CD8-positive, alpha-beta memory T cell (primary cell): ENCODE measurements at regions of chr1 and their contacts with region 1.

Region 1: DNA sequence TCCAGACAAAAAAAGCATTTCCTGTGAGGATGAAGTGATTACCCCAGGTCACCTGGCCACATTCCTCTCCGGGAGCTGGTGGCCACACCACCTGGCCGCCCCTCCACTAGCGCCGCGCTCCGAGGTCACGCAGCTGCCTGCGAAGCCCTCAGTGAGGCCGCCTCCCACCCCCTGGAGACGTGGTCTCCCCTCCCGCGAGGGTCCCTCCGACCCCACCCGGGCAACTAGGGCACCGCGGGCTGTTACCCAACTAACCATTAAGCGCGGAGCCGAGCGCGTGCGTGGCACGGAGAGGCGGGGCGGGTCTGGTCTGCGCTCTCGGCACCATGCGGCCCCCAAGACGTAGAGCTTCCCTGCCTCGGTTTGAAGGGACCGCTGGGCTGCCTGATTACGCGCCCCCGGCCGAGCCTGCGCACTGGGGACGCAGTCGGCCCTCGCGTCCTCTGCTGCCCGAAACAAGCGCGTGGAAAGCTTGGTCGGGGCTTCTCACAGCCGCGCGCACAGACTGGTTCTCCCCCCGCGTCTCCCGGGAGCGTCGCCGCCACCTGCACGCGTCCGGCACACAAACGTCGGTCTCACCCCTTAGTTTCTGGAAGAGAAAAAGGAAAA is 106.5 kb downstream of the SLC16A1 start:
- DNase-seq: no peak
- H3K4me3 ChIP-seq: no peak overlapping the region
- H3K4me3 Mint-ChIP-seq: peak overlapping the region in 1 of 7 donors; percentile 50
- H3K27ac ChIP-seq: no peak overlapping the region
- H3K27ac Mint-ChIP-seq: no peak overlapping the region
- H3K4me1 ChIP-seq: no peaks in the 10 kb centered on the region
- H3K4me1 Mint-ChIP-seq: peaks cover 0 to 3% (median 1%) of the 10 kb centered on the region in 3 donors
- H3K27me3 ChIP-seq: peaks cover 3% of the 10 kb centered on the region
- H3K27me3 Mint-ChIP-seq: peaks cover 26 to 48% of the 10 kb centered on the region in 2 donors

Region 2: DNA sequence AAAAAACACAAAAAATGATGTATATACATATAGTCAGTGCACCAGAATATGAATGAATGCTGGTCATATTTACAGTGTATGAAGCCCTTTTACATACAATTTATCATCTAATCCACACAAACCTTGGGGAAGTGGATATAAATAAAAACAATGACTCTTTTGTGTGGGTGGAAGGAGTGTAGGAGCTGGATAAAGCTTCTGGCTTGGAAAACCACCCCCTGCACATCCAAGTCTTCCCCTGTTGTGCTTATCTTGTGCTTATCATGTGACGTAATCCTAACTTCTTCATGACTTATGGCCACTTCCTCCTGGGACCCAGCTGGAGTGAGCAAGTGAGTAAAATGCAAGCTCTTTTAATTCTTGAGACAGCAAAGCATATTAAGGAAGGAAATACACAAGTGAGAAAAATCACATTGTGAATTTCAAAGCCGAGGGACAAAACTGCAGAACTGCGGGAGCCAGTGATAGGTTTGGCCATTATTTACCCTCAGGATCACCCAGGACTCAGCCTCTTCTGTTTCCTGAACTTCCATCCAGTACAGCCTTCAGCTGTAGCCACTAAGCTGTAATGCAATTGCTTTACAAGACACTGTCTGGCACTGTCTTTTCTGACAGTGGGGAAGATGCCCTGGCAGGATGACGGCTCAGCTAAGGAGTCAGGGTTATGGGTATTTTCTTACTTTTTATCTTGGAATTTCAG is 30.4 kb before region 1 on chr1:
- CTCF ChIA-PET with region 1: no interaction called
- POLR2A ChIA-PET with region 1: no interaction called
- DNase-seq: no peak
- H3K4me3 ChIP-seq: no peak overlapping the region
- H3K4me3 Mint-ChIP-seq: no peak overlapping the region
- H3K27ac ChIP-seq: peak overlapping the region; percentile 62
- H3K27ac Mint-ChIP-seq: no peak overlapping the region
- H3K4me1 ChIP-seq: no peaks in the 10 kb centered on the region
- H3K4me1 Mint-ChIP-seq: no peaks in the 10 kb centered on the region
- H3K27me3 ChIP-seq: no peaks in the 10 kb centered on the region
- H3K27me3 Mint-ChIP-seq: peaks cover 3 to 14% of the 10 kb centered on the region in 2 donors

Region 3: DNA sequence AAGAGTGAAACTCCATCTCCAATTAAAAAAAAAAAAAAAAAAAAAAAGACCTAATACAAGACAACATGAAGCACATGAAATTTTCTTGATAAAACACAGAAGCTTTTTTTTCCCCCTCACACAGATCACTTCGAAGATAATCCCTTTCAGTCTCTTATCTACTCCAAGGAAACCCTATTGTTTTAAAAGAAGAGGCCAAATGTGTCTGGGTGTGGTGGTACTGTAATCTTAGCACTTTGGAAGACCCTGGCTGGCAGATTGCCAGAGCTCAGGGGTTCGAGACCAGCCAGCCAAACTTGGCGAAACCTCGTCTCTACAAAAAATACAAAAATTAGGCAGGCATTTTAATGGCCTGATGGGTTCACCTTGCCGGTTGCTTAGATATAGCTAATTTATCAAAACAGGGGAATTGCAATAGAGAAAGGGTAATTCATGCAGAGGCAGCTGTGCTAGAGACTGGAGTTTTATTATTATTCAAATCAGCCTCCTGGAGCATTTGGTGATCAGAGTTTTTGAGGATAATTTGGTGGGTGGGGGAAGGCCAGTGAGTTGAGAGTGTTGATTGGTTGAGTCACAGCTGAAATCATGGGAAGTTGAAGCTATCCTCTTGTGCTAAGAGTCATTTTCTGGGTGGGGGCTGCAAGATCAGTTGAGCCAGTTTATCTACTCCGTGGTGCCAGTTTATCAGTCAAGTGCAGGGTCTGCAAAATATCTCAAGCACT is 43.9 kb after region 1 on chr1:
- CTCF ChIA-PET with region 1: no interaction called
- POLR2A ChIA-PET with region 1: interaction called, 10 read pairs
- DNase-seq: no peak
- H3K4me3 ChIP-seq: no peak overlapping the region
- H3K4me3 Mint-ChIP-seq: no peak overlapping the region
- H3K27ac ChIP-seq: no peak overlapping the region
- H3K27ac Mint-ChIP-seq: no peak overlapping the region
- H3K4me1 ChIP-seq: no peaks in the 10 kb centered on the region
- H3K4me1 Mint-ChIP-seq: no peaks in the 10 kb centered on the region
- H3K27me3 ChIP-seq: no peaks in the 10 kb centered on the region
- H3K27me3 Mint-ChIP-seq: no peaks in the 10 kb centered on the region